ENCODE measurements at regions of chr12 and their contacts with region 1.

Region 1: GRCh38 chr12:52879394-52880351 is 25.2 kb downstream of the KRT8 start:
- DNase-seq: peak; percentile 84 to 90 (median 88)
- ATAC-seq: peak; percentile 88
- H3K4me3 ChIP-seq: no peak overlapping the region
- H3K4me1 ChIP-seq: peaks cover 24% of the 10 kb centered on the region
- CTCF ChIP-seq: peak; percentile 82

Region 2: DNA sequence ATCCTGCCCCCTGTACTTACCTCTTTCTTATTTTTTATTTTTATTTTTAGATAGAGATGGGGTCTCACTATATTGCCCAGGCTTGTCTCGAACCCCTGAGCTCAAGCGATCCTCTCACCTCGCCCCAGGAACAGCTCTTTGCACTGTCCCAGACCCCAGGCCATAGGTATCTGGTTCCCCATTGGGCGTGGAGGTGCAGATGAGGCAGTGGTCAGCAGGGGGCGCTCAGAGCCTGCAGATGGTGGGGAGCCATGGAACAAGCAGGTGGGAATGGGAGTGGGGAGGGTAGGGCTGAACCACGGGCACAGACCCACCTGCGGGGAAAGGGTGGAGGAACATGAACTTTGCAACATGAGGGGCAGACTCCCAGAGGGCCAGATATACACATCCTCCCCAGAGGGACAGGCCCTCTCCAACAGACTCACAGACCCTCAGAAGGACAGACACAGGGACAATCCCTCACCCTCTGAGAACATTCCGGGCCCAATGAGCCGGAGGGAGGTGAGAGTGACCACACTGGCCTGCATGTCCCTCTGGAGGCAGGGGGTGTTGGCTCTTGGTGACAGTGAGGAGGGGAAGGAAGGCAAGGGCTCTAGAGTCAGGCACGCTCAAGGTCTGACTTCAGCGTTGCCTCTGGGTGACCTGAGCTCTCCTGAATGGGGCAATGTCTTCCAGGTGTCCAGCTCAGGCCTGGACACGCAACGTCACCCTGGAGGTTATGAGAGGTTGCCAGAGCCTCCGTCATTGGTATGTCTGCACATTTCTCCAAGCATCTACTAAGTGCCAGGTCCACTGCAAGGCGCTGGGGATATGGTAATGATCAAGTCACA is 722.7 kb before region 1 on chr12:
- intact Hi-C with region 1: loop called in 1 of 2 experiments (anchors 10 kb)
- DNase-seq: peak; percentile 75 to 88 (median 87)
- ATAC-seq: peak; percentile 54
- H3K4me3 ChIP-seq: no peak overlapping the region
- H3K4me1 ChIP-seq: peaks cover 8% of the 10 kb centered on the region
- CTCF ChIP-seq: peak; percentile 90

Region 3: DNA sequence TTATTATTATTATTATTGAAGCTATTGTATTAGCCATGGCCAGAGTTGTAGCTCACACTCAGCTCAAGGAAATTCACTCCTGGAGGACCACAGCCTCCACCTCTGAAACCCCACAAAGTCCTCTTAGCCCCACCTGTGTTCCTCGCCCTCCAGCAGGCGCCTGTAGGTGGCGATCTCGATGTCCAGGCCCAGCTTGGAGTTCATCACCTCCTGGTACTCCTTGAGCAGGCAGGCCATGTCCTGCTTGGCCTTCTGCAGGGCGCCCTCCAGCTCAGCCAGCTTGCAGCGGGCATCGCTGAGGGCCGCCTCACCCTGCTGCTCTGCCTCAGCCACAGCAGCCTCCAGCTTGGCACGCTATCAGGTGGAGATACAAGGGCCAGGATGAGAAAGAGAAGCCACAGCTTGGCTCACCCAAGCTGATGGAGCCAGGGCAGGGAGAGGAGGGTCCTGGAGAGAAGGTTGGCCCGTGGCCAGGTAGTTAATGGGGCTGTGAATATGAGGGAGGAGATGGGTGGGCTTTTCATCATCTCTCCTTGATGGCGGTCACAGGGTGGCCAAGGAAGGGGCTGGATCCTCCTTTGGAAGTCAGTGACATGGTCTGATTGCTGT is 517.5 kb before region 1 on chr12:
- intact Hi-C with region 1: loop called in 1 of 2 experiments (anchors 10 kb)
- DNase-seq: no peak
- ATAC-seq: no peak
- H3K4me3 ChIP-seq: no peak overlapping the region
- H3K4me1 ChIP-seq: no peaks in the 10 kb centered on the region
- CTCF ChIP-seq: no peak

Region 4: DNA sequence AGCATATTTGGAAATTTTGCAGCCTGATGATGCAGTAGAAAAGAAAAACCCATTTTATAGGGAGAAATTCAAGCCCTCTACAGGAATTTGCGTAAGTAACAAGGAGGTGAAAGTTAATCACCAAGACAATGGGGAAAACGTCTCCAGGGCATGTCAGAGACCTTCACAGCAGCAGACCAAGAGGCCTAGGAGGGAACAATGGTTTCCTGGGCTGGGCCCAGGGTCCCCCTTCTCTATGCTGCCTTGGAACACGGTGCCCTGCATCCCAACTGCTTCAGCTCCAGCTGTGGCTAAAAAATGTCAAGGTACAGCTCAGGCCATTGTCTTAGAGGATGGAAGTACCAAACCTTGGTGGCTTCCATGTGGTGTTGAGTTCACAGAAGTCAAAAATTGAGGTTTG is 399.6 kb before region 1 on chr12:
- intact Hi-C with region 1: no loop called
- DNase-seq: no peak
- ATAC-seq: no peak
- H3K4me3 ChIP-seq: no peak overlapping the region
- H3K4me1 ChIP-seq: no peaks in the 10 kb centered on the region
- CTCF ChIP-seq: no peak

Region 5: DNA sequence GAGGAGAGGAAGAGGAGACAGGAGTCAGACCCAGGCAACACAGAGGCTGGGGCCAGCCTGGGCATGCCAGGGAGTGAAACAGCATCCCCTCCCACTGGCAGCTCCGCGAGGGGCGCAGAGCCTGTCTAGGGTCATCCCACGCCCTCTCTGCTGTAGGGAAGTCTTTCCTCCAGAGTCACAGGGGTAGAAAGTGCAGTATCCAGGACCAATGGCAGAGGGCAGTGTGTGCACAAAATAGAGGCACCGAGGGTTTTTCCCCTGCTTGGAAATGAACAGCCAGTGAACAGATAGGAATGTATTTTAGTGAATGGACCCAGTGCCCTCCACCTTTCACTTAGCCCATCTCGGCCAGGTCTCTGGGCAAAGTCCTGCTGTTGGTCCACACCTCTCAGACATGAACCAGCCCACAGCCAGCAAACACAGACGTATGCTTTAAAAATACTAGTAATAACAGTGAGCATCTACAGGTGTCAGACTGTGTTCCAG is 296.7 kb before region 1 on chr12:
- intact Hi-C with region 1: loop called (anchors 5 kb)
- DNase-seq: peak in 2 of 3 donors; percentile 66 to 84
- ATAC-seq: peak; percentile 86
- H3K4me3 ChIP-seq: no peak overlapping the region
- H3K4me1 ChIP-seq: no peaks in the 10 kb centered on the region
- CTCF ChIP-seq: peak; percentile 55

Region 6: GRCh38 chr12:53031617-53032016 is 151.9 kb after region 1 on chr12:
- intact Hi-C with region 1: no loop called
- DNase-seq: no peak
- ATAC-seq: peak; percentile 83
- H3K4me3 ChIP-seq: no peak overlapping the region
- H3K4me1 ChIP-seq: no peaks in the 10 kb centered on the region
- CTCF ChIP-seq: no peak

Measured in mucosa of descending colon (tissue), 3 donors.